ENCODE measurements at regions of chrX and their contacts with region 1.

Region 1: GRCh38 chrX:15242899-15243555 is 26.9 kb downstream of the ASB9 start:
- DNase-seq: peak; percentile 43
- H3K4me3 ChIP-seq: no peak overlapping the region
- H3K27ac ChIP-seq: no peak overlapping the region
- H3K4me1 ChIP-seq: no peaks in the 10 kb centered on the region
- H3K27me3 ChIP-seq: no peaks in the 10 kb centered on the region
- CTCF ChIP-seq: peak; percentile 61 to 74

Region 2: GRCh38 chrX:14039344-14039743 is 1203.7 kb before region 1 on chrX:
- CTCF ChIA-PET with region 1: no interaction called
- dilution Hi-C with region 1: no loop called
- in situ Hi-C with region 1: loop called (anchors 10 to 25 kb)
- intact Hi-C with region 1: loop called (anchors 1 kb)
- DNase-seq: peak; percentile 25
- H3K4me3 ChIP-seq: no peak overlapping the region
- H3K27ac ChIP-seq: no peak overlapping the region
- H3K4me1 ChIP-seq: peaks cover 4% of the 10 kb centered on the region
- H3K27me3 ChIP-seq: no peaks in the 10 kb centered on the region
- CTCF ChIP-seq: peak; percentile 71 to 72

Region 3: DNA sequence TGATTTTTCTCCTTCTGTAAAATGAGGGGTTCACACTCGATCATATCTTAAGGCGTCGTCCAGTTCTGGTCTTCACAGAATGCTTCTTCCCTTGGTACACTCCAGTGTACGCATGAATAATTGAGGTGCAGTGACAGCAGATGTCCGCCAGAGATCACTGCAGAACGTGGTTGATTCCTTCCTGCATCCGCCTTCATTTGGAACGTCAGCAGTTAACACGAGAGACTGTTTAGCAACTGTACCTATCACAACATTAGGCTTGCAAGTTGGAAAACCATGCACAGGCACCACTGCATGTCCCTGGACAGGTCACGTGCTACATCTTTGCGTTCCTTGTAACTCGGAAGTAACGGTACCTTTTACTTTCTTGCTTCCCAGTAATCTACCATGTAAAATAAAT is 1147.3 kb before region 1 on chrX:
- CTCF ChIA-PET with region 1: no interaction called
- dilution Hi-C with region 1: no loop called
- in situ Hi-C with region 1: no loop called
- intact Hi-C with region 1: loop called (anchors 1 kb)
- DNase-seq: peak; percentile 58
- H3K4me3 ChIP-seq: no peak overlapping the region
- H3K27ac ChIP-seq: no peak overlapping the region
- H3K4me1 ChIP-seq: no peaks in the 10 kb centered on the region
- H3K27me3 ChIP-seq: peaks cover 3% of the 10 kb centered on the region
- CTCF ChIP-seq: peak; percentile 89 to 93

Region 4: GRCh38 chrX:14591976-14592375 is 651.1 kb before region 1 on chrX:
- CTCF ChIA-PET with region 1: no interaction called
- dilution Hi-C with region 1: loop called (anchors 25 kb)
- in situ Hi-C with region 1: no loop called
- intact Hi-C with region 1: no loop called
- DNase-seq: no peak
- H3K4me3 ChIP-seq: no peak overlapping the region
- H3K27ac ChIP-seq: no peak overlapping the region
- H3K4me1 ChIP-seq: no peaks in the 10 kb centered on the region
- H3K27me3 ChIP-seq: peaks cover 2% of the 10 kb centered on the region
- CTCF ChIP-seq: no peak

Region 5: GRCh38 chrX:14712102-14712501 is 530.9 kb before region 1 on chrX:
- CTCF ChIA-PET with region 1: no interaction called
- dilution Hi-C with region 1: no loop called
- in situ Hi-C with region 1: no loop called
- intact Hi-C with region 1: loop called (anchors 5 kb)
- DNase-seq: no peak
- H3K4me3 ChIP-seq: no peak overlapping the region
- H3K27ac ChIP-seq: no peak overlapping the region
- H3K4me1 ChIP-seq: no peaks in the 10 kb centered on the region
- H3K27me3 ChIP-seq: peaks cover 3% of the 10 kb centered on the region
- CTCF ChIP-seq: peak in 1 of 2 donors; percentile 15

Region 6: GRCh38 chrX:15107367-15107988 is 135.5 kb before region 1 on chrX:
- CTCF ChIA-PET with region 1: no interaction called
- dilution Hi-C with region 1: no loop called
- in situ Hi-C with region 1: no loop called
- intact Hi-C with region 1: loop called (anchors 1 kb)
- DNase-seq: no peak
- H3K4me3 ChIP-seq: no peak overlapping the region
- H3K27ac ChIP-seq: no peak overlapping the region
- H3K4me1 ChIP-seq: no peaks in the 10 kb centered on the region
- H3K27me3 ChIP-seq: no peaks in the 10 kb centered on the region
- CTCF ChIP-seq: peak; percentile 7 to 50

Region 7: DNA sequence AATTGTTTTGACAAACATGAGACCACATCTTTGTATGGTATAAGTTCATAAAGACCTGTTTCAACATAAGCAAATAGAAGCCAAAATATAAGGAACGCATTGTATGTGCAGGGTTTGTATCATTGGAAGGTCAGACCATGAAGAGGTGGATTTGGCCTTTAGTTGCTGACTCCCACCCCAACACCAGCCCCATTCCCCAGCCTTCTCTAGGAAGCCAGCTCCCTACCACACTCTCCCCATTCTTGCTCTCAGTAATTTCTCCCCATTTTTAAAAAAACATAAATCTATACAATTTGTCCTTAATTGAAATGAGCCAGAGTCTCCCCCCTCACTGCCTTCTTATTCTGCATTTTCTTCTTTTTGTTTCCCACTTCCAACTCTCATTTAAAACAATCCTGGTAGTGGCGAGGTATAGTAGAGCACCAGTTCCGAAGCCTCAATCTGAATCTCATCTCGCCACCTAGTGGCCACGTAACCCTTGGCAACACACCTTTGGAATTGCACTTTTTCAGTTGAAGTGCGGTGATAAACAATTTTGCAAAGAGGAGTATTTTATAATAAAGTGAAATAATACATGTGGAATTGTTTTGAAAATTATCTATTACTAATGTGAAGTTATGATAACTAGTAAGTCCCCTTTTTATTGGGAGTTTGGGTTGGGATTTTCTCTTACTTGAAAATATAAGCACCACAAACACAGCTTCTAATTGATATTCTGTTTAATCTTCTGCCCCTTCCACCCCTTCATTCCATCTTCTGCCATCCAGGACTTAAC is 99.8 kb before region 1 on chrX:
- CTCF ChIA-PET with region 1: interaction called, 4 read pairs
- dilution Hi-C with region 1: no loop called
- in situ Hi-C with region 1: no loop called
- intact Hi-C with region 1: loop called (anchors 1 kb)
- DNase-seq: peak; percentile 34
- H3K4me3 ChIP-seq: no peak overlapping the region
- H3K27ac ChIP-seq: no peak overlapping the region
- H3K4me1 ChIP-seq: no peaks in the 10 kb centered on the region
- H3K27me3 ChIP-seq: no peaks in the 10 kb centered on the region
- CTCF ChIP-seq: peak; percentile 90 to 93

Region 8: DNA sequence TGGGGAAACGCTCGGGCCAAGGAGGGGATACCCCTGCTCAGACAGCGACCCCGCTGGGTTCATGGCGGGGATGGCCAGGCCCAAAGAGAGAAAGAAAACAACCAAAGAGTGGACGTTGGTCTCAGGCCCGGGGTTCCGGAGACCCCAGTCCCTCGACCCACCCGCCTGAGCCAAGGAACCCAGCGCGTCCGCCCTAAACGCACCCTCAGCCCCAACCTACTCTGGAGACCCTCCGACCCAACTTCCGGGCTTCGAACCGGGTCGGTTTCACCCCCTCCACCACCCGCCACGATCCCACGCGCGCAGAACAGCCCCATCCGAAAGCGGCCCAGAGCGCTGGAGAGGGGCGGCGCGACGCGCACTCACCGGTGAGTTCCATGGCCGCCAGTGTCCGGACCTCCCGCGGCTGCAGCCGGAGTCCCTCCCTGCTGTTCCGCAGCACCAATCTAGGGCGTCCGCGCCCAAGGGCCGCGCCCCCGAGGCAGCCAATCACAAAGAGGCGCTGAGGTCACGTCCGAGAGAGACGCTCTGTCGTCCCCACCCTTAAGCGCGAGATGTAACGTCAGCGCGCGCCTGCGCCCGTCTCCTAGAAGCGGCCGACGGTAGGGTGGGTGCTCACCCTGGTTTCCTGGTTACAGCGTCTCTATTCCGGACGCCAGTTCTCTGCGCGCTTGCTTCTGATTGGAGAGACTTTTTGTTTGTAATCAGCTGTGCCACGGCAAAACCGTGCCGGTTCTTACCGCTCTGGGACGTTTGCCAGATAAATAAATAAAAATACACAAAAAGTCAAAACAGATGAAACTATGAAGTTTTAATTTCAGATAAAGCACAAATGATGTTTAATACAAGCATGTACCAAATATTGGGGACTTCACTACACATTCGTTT is 92.4 kb after region 1 on chrX and contains the start of gene PIGA:
- CTCF ChIA-PET with region 1: no interaction called
- dilution Hi-C with region 1: no loop called
- in situ Hi-C with region 1: no loop called
- intact Hi-C with region 1: no loop called
- DNase-seq: peak; percentile 96
- H3K4me3 ChIP-seq: peak within 1 kb of the TSS; percentile 43 to 78 (median 67)
- H3K27ac ChIP-seq: peak within 1 kb of the TSS; percentile 97
- H3K4me1 ChIP-seq: peaks cover 8% of the 10 kb centered on the region
- H3K27me3 ChIP-seq: peaks cover 9% of the 10 kb centered on the region
- CTCF ChIP-seq: no peak
- total RNA-seq, gene PIGA: 13.3 to 20.9 TPM